ENCODE measurements at regions of chr6 and their contacts with region 1.

Region 1: GRCh38 chr6:14499841-14500240 is 382.3 kb downstream of the CD83 start:
- DNase-seq: peak; percentile 90
- H3K4me3 ChIP-seq: no peak overlapping the region
- H3K27ac ChIP-seq: peak overlapping the region; percentile 15
- H3K4me1 ChIP-seq: peaks cover 27% of the 10 kb centered on the region
- H3K27me3 ChIP-seq: no peaks in the 10 kb centered on the region
- CTCF ChIP-seq: 0 out of 2 replicates have a peak, but pooled peaks have one; percentile 18

Region 2: GRCh38 chr6:13846841-13847240 is 653.0 kb before region 1 on chr6:
- CTCF ChIA-PET with region 1: no interaction called
- POLR2A ChIA-PET with region 1: no interaction called
- intact Hi-C with region 1: no loop called
- DNase-seq: peak; percentile 27
- H3K4me3 ChIP-seq: no peak overlapping the region
- H3K27ac ChIP-seq: no peak overlapping the region
- H3K4me1 ChIP-seq: no peaks in the 10 kb centered on the region
- H3K27me3 ChIP-seq: no peaks in the 10 kb centered on the region
- CTCF ChIP-seq: peak; percentile 43; the same call in 1 of the 2 replicates

Region 3: DNA sequence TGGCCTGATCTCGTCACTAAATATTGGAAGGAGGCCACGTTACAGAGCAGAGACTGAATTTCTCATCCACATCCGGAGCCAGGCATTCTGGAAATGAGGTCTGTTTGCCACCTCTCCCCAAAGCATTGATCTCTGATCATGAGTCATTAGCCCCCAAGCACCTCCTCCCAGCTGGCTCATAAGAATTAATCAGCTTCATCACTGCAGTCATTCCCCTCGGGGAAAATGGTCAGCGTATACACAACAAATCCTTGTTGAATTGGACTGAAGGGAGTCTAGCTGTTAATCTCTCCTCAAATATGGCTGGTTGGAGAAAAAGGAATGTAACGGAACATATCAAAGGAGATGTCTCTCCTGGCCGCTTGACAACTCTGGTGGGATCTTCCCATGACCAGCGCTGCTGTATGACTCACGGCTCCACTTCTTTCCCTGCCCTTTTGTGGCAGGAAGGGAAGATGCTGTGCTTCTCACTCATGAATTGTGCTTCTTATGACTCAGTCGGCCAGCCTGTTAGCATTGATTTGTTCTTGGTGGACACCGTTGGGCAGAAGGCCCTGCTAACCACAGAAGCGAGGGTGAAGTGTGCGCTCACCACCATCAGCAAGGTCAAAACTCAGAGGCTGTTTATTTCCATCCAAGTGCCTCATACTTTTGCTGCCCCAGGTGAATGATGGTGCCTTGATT is 498.4 kb before region 1 on chr6:
- CTCF ChIA-PET with region 1: no interaction called
- POLR2A ChIA-PET with region 1: no interaction called
- intact Hi-C with region 1: no loop called
- DNase-seq: peak; percentile 83
- H3K4me3 ChIP-seq: peak overlapping the region; percentile 3
- H3K27ac ChIP-seq: peak overlapping the region; percentile 45
- H3K4me1 ChIP-seq: peaks cover 18% of the 10 kb centered on the region
- H3K27me3 ChIP-seq: no peaks in the 10 kb centered on the region
- CTCF ChIP-seq: no peak

Region 4: GRCh38 chr6:14476793-14477531 is 22.9 kb before region 1 on chr6:
- CTCF ChIA-PET with region 1: no interaction called
- POLR2A ChIA-PET with region 1: no interaction called
- intact Hi-C with region 1: no loop called
- DNase-seq: no peak
- H3K4me3 ChIP-seq: no peak overlapping the region
- H3K27ac ChIP-seq: no peak overlapping the region
- H3K4me1 ChIP-seq: no peaks in the 10 kb centered on the region
- H3K27me3 ChIP-seq: no peaks in the 10 kb centered on the region
- CTCF ChIP-seq: no peak

Region 5: DNA sequence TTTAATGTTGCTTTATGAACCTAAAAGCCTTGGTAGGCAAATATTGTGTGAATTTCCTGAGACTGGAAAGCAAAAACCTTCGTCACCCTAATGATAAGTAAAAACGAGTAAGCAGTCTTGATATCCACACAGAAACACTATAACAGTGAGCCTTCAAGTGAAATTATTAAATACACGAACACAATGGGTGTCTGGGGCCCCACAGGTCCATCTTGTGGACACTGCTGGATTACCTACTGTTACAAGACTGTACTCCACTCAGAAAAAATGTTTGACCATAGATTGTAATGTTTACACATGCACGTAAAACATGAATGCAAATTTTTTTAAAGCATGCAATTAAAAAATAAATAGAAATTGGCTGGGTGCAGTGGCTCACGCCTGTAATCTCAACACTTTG is 84.6 kb after region 1 on chr6:
- CTCF ChIA-PET with region 1: no interaction called
- POLR2A ChIA-PET with region 1: no interaction called
- intact Hi-C with region 1: no loop called
- DNase-seq: no peak
- H3K4me3 ChIP-seq: no peak overlapping the region
- H3K27ac ChIP-seq: no peak overlapping the region
- H3K4me1 ChIP-seq: no peaks in the 10 kb centered on the region
- H3K27me3 ChIP-seq: no peaks in the 10 kb centered on the region
- CTCF ChIP-seq: no peak

Region 6: DNA sequence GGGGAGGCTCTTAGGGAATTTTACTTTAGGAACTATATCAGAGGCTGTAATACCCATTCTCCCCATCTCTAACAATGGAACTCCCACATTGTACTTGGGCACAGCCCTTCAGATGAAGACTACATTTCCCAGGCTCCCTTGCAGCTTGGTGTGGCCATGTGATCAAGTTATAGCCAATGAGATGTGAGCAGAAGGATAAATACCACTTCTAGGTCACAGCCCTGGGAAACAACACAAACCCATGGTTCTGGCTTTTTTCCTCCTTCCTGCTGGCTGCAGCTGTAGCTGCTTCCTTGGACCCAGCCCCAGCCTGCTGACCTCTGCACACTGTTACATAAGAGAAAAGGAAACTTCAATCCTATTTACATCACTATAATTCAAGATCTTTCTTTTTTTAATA is 300.1 kb after region 1 on chr6:
- CTCF ChIA-PET with region 1: no interaction called
- POLR2A ChIA-PET with region 1: no interaction called
- intact Hi-C with region 1: loop called (anchors 10 kb)
- DNase-seq: peak; percentile 89
- H3K4me3 ChIP-seq: no peak overlapping the region
- H3K27ac ChIP-seq: peak overlapping the region; percentile 91
- H3K4me1 ChIP-seq: peaks cover 34% of the 10 kb centered on the region
- H3K27me3 ChIP-seq: no peaks in the 10 kb centered on the region
- CTCF ChIP-seq: no peak